Activated CD4-positive, alpha-beta memory T cell treated with anti-CD3 and anti-CD28 coated beads, Interleukin-2, amount 10 ng/mL, durations not matched to agents 7 days and 5 days (primary cell): ENCODE measurements at regions of chr5 and their contacts with region 1.

Region 1: DNA sequence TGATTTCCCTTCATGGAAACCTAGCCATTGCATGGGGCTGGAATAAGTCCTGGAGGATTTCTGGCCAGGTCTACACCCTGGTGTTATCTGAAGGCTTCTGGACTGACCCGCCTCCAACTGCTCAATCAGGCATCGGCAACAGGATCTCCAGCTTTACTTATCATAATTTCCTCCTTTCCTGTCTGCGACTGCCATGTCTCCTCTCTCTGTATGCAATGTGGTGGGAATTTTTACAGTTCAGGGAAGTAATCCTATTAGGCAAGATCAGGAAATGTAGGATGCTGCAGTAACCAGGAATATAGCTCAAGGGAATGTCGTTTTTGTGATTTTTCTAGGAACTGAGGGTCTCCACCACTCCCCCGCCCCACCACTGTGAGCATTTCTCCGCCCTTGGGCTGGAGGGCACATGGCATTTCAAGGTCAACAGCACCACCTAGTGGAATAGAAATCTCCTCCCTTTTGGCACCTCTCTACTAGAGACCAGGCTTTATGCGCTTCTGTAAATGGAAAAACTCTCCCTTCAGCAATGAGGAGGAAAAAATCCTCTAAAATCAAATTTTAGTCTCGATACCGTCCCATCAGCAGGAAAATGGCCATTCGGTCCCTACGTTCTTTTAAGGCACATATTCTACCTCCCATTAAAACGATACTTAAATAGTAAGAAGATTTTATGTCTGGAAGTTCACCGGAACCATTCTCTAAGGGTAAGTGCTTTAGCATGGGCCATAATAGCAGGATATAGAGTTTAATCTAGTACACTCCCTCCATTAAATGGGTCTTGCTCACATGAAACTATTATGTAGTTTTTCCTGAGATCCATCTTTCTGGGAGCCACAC is 93.0 kb downstream of the YTHDC2 start:
- DNase-seq: peak; percentile 53
- H3K4me3 Mint-ChIP-seq: no peak overlapping the region
- H3K27ac Mint-ChIP-seq: no peak overlapping the region
- H3K4me1 Mint-ChIP-seq: peaks cover 17% of the 10 kb centered on the region
- H3K27me3 Mint-ChIP-seq: peaks cover 32% of the 10 kb centered on the region

Region 2: GRCh38 chr5:113330533-113331208 is 275.8 kb before region 1 on chr5:
- CTCF ChIA-PET with region 1: interaction called, 29 read pairs
- POLR2A ChIA-PET with region 1: no interaction called
- DNase-seq: no peak
- H3K4me3 Mint-ChIP-seq: no peak overlapping the region
- H3K27ac Mint-ChIP-seq: no peak overlapping the region
- H3K4me1 Mint-ChIP-seq: peaks cover 19% of the 10 kb centered on the region
- H3K27me3 Mint-ChIP-seq: peaks cover 2% of the 10 kb centered on the region

Region 3: DNA sequence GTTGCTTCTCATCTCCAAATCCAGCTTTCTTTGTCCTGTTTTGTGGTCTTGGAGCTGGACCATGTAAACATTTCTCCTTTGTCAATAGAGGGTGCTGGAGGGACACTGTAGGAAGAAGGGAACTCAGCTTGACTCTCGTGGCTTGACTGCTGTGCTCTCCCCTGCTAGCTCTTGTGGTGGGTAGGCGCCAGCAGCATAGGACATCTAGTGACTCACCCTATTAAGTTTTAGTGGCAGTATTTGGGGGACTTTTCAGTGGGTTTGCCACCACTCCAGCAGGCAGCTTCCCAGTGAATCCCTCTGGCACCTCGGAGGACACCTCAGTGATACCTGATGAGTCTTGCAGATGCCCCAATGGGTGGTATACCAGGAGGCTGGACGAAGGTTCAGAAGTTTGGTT is 269.5 kb before region 1 on chr5:
- CTCF ChIA-PET with region 1: interaction called, 29 read pairs
- POLR2A ChIA-PET with region 1: no interaction called
- DNase-seq: peak; percentile 21
- H3K4me3 Mint-ChIP-seq: no peak overlapping the region
- H3K27ac Mint-ChIP-seq: no peak overlapping the region
- H3K4me1 Mint-ChIP-seq: peaks cover 14% of the 10 kb centered on the region
- H3K27me3 Mint-ChIP-seq: peaks cover 5% of the 10 kb centered on the region

Region 4: DNA sequence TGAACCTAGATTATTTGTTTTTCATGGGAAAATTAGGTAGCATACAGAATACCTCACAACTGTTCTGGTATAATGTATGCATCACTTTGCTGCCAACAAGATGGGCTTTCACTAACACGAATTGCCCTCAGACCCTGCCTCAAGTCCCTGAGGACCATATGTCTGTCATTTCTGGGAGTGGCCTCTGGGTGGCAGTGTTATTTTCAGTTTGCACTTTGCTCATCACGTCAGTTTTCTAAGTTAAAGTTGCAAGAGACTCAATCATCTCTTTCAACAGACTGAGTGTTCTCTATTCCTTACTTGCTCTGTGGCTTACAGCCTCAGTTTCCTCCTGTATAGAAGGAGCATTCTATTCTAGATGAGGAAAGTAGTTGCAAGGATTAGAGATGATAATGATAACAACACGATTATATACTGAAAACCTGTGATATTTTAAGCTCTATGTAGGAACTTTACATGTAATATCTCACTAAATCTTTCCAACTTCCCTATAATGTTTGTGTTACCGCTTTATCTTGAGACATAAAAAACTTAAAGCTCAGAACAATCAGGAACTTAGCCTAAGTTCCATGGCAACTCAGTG is 227.5 kb before region 1 on chr5:
- CTCF ChIA-PET with region 1: interaction called, 16 read pairs
- POLR2A ChIA-PET with region 1: no interaction called
- DNase-seq: peak; percentile 65
- H3K4me3 Mint-ChIP-seq: peak overlapping the region; percentile 2
- H3K27ac Mint-ChIP-seq: peak overlapping the region; percentile 44
- H3K4me1 Mint-ChIP-seq: peaks cover 46% of the 10 kb centered on the region
- H3K27me3 Mint-ChIP-seq: no peaks in the 10 kb centered on the region

Region 5: GRCh38 chr5:113652161-113652560 is 45.6 kb after region 1 on chr5:
- CTCF ChIA-PET with region 1: no interaction called
- POLR2A ChIA-PET with region 1: no interaction called
- DNase-seq: no peak
- H3K4me3 Mint-ChIP-seq: no peak overlapping the region
- H3K27ac Mint-ChIP-seq: no peak overlapping the region
- H3K4me1 Mint-ChIP-seq: no peaks in the 10 kb centered on the region
- H3K27me3 Mint-ChIP-seq: peaks cover 23% of the 10 kb centered on the region